CD8-positive, alpha-beta T cell (primary cell): ENCODE measurements at regions of chr21 and their contacts with region 1.

Region 1: DNA sequence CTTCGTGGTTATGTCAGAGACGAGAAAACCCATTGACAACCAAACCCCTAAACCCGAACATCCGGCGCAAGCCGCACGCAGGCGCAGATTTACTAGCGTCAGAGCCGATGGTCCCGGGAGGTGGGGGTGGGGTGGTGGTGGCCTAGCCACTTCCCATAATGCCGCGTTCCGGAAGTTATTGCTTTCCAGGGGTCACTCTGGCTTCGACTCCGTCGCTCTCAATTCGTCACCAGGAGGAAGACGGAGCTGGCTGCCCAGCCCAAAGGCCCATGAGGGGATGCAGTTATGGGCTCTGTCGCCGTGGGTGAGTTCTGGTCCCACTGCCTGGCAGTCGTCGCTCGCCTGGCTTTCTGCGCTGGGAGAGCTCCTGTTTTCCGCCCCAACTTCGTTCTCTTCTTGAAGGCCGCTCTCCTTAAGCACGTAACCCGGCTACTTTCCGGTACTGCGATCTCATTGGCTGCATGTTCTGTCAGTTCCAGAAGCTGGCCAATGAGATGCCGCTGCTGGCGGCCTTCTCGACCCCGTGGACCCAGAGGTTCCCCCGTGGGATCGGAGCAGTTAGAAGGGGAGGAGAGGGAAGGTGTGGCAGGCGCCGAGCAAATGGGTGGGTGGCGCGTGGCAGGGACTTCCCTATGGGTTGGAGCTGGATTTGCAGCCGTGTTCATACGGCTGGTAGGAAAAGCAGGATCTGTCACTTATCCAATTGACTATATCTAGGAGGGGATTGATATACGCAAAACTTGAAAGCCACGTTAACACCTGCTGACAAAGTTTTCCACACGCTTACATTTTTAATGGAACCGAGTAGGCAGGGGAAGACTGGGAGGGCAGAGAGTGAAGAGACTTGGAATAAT is at the start of gene USP16:
- DNase-seq: peak; percentile 87 to 98 (median 94)
- ATAC-seq: peak; percentile 87
- H3K4me3 ChIP-seq: peak within 1 kb of the TSS; percentile 65 to 91
- H3K4me3 Mint-ChIP-seq: peak within 1 kb of the TSS; percentile 95
- H3K27ac ChIP-seq: peak within 1 kb of the TSS; percentile 93 to 98
- H3K27ac Mint-ChIP-seq: peak within 1 kb of the TSS; percentile 100
- H3K4me1 ChIP-seq: peaks cover 45% of the 10 kb centered on the region
- H3K4me1 Mint-ChIP-seq: peaks cover 59% of the 10 kb centered on the region
- H3K27me3 ChIP-seq: no peaks in the 10 kb centered on the region
- H3K27me3 Mint-ChIP-seq: no peaks in the 10 kb centered on the region
- CTCF ChIP-seq: no peak
- total RNA-seq, gene USP16: 84.8 to 91.2 TPM

Region 2: GRCh38 chr21:28537371-28538079 is 487.2 kb before region 1 on chr21:
- CTCF ChIA-PET with region 1: no interaction called
- POLR2A ChIA-PET with region 1: no interaction called
- intact Hi-C with region 1: no loop called
- DNase-seq: no peak
- ATAC-seq: no peak
- H3K4me3 ChIP-seq: no peak overlapping the region
- H3K4me3 Mint-ChIP-seq: no peak overlapping the region
- H3K27ac ChIP-seq: no peak overlapping the region
- H3K27ac Mint-ChIP-seq: no peak overlapping the region
- H3K4me1 ChIP-seq: no peaks in the 10 kb centered on the region
- H3K4me1 Mint-ChIP-seq: no peaks in the 10 kb centered on the region
- H3K27me3 ChIP-seq: no peaks in the 10 kb centered on the region
- H3K27me3 Mint-ChIP-seq: no peaks in the 10 kb centered on the region
- CTCF ChIP-seq: no peak

Region 3: GRCh38 chr21:28992526-28993292 is 32.0 kb before region 1 on chr21 and contains the start of gene LTN1:
- CTCF ChIA-PET with region 1: interaction called, 6 read pairs
- POLR2A ChIA-PET with region 1: interaction called, 71 read pairs
- intact Hi-C with region 1: loop called (anchors 1 kb)
- DNase-seq: peak; percentile 98 to 100 (median 99)
- ATAC-seq: peak; percentile 93
- H3K4me3 ChIP-seq: peak within 1 kb of the TSS; percentile 95 to 98
- H3K4me3 Mint-ChIP-seq: peak within 1 kb of the TSS; percentile 93
- H3K27ac ChIP-seq: peak within 1 kb of the TSS; percentile 84 to 88
- H3K27ac Mint-ChIP-seq: peak within 1 kb of the TSS; percentile 95
- H3K4me1 ChIP-seq: peaks cover 21% of the 10 kb centered on the region
- H3K4me1 Mint-ChIP-seq: peaks cover 40% of the 10 kb centered on the region
- H3K27me3 ChIP-seq: no peaks in the 10 kb centered on the region
- H3K27me3 Mint-ChIP-seq: no peaks in the 10 kb centered on the region
- CTCF ChIP-seq: no peak
- total RNA-seq, gene LTN1: 26.3 to 28.5 TPM

Region 4: GRCh38 chr21:29002442-29003144 is 22.1 kb before region 1 on chr21:
- CTCF ChIA-PET with region 1: interaction called, 6 read pairs
- POLR2A ChIA-PET with region 1: interaction called, 123 read pairs
- intact Hi-C with region 1: loop called (anchors 1 kb)
- DNase-seq: peak; percentile 90 to 99 (median 95)
- ATAC-seq: peak; percentile 100
- H3K4me3 ChIP-seq: peak overlapping the region; percentile 65 to 71
- H3K4me3 Mint-ChIP-seq: peak overlapping the region; percentile 93
- H3K27ac ChIP-seq: peak overlapping the region; percentile 93 to 94
- H3K27ac Mint-ChIP-seq: peak overlapping the region; percentile 99
- H3K4me1 ChIP-seq: peaks cover 8% of the 10 kb centered on the region
- H3K4me1 Mint-ChIP-seq: peaks cover 15% of the 10 kb centered on the region
- H3K27me3 ChIP-seq: no peaks in the 10 kb centered on the region
- H3K27me3 Mint-ChIP-seq: no peaks in the 10 kb centered on the region
- CTCF ChIP-seq: no peak

Region 5: DNA sequence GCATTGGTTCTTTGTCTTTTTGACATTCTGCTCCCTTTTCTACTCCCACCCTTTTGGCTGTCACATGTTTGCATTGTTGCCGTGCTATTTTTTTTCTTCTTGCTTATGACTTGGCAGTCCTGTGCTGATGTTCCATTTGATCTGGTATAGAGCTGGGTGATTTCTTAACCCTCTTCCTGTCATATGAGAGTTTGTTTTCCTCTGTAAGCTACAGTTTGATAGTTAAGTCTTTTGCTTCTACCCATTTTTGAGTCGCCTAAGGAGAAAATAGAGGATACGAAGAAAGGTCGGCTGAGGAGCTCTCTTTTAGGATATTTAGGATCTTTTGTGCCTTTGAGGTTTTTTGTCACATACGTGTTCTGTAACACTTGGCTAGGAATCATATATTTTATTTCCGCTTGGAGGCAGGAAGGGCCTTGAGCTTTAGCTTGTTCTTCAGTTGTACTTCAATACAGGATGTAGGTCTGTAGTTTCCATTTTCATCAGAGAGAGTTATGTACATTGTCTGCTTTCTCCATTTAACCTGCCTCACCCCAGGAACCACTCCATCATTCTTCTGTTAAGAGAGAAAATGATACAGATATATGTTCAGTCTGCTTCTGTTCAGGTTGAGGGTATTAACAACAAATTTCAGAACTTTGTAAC is 424.7 kb after region 1 on chr21:
- CTCF ChIA-PET with region 1: no interaction called
- POLR2A ChIA-PET with region 1: interaction called, 3 read pairs
- intact Hi-C with region 1: loop called in 1 of 2 experiments (anchors 5 kb)
- DNase-seq: peak in 3 of 9 experiments; percentile 41 to 69 (median 42)
- ATAC-seq: peak; percentile 84
- H3K4me3 ChIP-seq: no peak overlapping the region
- H3K4me3 Mint-ChIP-seq: peak overlapping the region; percentile 70
- H3K27ac ChIP-seq: peak overlapping the region; percentile 52 to 65
- H3K27ac Mint-ChIP-seq: peak overlapping the region; percentile 97
- H3K4me1 ChIP-seq: peaks cover 23% of the 10 kb centered on the region
- H3K4me1 Mint-ChIP-seq: peaks cover 40% of the 10 kb centered on the region
- H3K27me3 ChIP-seq: no peaks in the 10 kb centered on the region
- H3K27me3 Mint-ChIP-seq: no peaks in the 10 kb centered on the region
- CTCF ChIP-seq: no peak